Activated CD4-positive, alpha-beta memory T cell treated with anti-CD3 and anti-CD28 coated beads for 36 hours (primary cell): ENCODE measurements at regions of chr1 and their contacts with region 1.

Region 1: GRCh38 chr1:156212833-156213643 is at the start of gene PMF1:
- DNase-seq: peak; percentile 98
- H3K4me3 Mint-ChIP-seq: peak within 1 kb of the TSS; percentile 76
- H3K27ac Mint-ChIP-seq: peak within 1 kb of the TSS; percentile 96
- H3K4me1 Mint-ChIP-seq: peaks cover 40% of the 10 kb centered on the region
- H3K27me3 Mint-ChIP-seq: no peaks in the 10 kb centered on the region
- total RNA-seq, gene PMF1: 99.5 to 105 TPM

Region 2: DNA sequence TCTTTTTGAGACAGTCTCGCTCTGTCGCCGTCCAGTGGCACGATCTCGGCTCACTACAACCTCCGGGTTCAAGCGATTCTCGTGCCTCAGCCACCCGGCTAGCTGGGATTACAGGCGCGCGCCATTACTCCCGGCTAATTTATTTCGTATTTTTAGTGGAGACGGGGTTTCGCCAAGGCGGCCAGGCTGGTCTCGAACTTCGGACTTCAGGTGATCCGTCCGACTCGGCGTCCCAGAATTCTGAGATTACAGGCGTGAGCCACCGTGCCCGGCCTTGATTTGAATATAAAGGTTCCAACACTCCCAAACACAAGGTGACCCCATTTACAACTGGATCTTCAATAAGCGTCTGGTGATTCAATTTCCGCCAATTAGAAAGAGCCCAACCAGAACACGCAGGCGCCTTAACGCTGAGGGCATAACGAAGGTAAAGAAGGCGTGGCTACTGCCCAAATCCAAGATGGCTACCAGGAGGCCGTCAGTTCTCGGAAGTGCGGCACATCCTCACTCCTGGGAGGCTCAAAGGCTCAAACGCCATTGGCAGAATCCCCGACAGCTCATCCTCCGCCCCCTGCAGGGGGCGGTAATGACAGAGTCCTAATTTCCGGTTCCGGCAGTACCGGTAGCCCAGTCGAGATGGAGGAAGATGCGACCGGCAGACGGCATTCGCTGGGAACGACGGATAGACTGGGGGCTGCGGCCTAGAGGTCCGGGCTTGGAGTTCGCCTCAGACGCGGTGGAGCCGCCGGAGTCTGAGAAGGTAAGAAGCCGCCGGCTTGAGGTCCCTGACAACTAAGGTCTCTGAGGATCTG is 19.3 kb before region 1 on chr1 and contains the start of gene SLC25A44:
- CTCF ChIA-PET with region 1: interaction called, 14 read pairs
- POLR2A ChIA-PET with region 1: interaction called, 62 read pairs
- intact Hi-C with region 1: loop called (anchors 1 kb)
- DNase-seq: peak; percentile 99
- H3K4me3 Mint-ChIP-seq: peak within 1 kb of the TSS; percentile 100
- H3K27ac Mint-ChIP-seq: peak within 1 kb of the TSS; percentile 81
- H3K4me1 Mint-ChIP-seq: peaks cover 61% of the 10 kb centered on the region
- H3K27me3 Mint-ChIP-seq: no peaks in the 10 kb centered on the region
- total RNA-seq, gene SLC25A44: 61.3 to 62.2 TPM

Region 3: DNA sequence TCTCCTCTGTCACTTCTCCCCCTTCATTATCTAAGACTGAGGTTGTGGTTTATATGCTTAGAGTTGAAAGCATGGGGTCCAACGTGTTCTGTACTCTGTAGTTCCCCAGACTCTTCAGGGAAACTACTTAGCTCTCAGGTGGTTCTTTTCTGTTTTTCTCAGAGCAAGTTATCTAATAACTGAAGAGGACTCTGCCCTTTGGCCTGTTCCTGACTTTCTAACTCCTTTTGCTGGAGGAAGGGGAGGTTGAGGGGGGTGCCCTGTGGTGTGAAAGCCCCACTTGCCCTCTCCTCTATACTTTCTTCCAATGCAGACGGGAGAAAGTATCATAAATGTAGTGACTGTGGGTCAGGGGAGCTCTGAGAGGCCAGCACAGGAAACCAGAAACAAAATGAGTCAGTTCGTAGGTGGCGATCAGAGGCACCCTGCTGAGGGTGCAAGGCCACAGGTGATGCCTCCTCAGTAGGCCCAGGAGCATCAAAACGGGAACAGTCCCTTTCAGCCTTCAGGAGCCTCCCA is 14.1 kb before region 1 on chr1:
- CTCF ChIA-PET with region 1: interaction called, 14 read pairs
- POLR2A ChIA-PET with region 1: interaction called, 62 read pairs
- intact Hi-C with region 1: loop called (anchors 1 kb)
- DNase-seq: peak; percentile 73
- H3K4me3 Mint-ChIP-seq: no peak overlapping the region
- H3K27ac Mint-ChIP-seq: no peak overlapping the region
- H3K4me1 Mint-ChIP-seq: peaks cover 64% of the 10 kb centered on the region
- H3K27me3 Mint-ChIP-seq: no peaks in the 10 kb centered on the region

Region 4: GRCh38 chr1:156298852-156299357 is 85.9 kb after region 1 on chr1 and contains the start of gene VHLL:
- CTCF ChIA-PET with region 1: no interaction called
- POLR2A ChIA-PET with region 1: no interaction called
- intact Hi-C with region 1: no loop called
- DNase-seq: no peak
- H3K4me3 Mint-ChIP-seq: no peak within 1 kb of the TSS
- H3K27ac Mint-ChIP-seq: no peak within 1 kb of the TSS
- H3K4me1 Mint-ChIP-seq: peaks cover 16% of the 10 kb centered on the region
- H3K27me3 Mint-ChIP-seq: no peaks in the 10 kb centered on the region
- total RNA-seq, gene VHLL: not detected